Activated CD4-positive, alpha-beta T cell treated with anti-CD3 and anti-CD28 coated beads for 36 hours (primary cell): ENCODE measurements at regions of chr5 and their contacts with region 1.

Region 1: DNA sequence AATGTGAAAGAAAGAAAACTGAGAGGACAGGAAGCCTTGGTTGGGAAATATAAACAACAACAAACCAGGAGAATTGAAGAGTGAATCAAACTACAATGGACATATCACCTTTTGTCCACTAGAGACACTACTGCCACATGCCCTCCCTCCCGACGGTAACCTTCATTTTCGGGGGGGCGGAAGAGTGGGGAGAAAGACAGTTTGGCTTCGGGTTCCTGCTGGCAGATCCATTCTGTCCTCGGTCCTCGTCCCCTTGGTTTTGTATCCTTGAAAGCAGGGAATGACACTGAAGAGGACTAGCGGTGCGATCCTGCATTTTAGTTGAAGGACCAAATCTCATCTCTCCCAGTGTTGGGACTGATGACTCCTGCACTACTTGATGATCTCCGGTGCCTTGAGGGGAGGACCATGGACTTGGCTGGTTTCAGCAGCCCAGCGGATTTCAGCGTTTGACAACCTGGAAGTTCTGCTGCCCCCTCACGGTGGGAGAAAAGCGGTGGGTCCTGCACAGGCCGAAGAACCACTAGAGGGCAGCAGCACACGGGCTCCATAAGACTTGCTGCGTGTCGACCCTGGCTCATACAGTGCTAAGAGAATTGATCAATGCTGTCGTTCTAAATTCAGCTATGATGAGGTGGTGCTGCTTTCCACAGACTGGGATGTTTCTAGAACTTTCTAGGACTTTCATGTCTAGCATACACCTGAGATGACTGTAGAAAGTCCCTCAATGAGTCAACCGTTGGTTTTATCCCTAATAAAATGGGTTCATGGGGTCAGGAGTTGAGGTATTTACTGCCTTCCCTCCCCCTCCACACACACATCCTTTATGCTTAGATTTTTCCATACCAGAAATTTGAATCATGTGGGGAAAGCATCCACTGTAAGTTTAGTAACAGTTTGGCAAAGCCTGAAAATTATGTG is 15.1 kb upstream of the ZNF131 start:
- DNase-seq: peak; percentile 93
- ATAC-seq: peak; percentile 91
- H3K4me3 Mint-ChIP-seq: peak overlapping the region; percentile 71
- H3K27ac Mint-ChIP-seq: peak overlapping the region; percentile 91
- H3K4me1 Mint-ChIP-seq: peaks cover 43% of the 10 kb centered on the region
- H3K27me3 Mint-ChIP-seq: no peaks in the 10 kb centered on the region

Region 2: GRCh38 chr5:42349163-42349562 is 756.5 kb before region 1 on chr5:
- CTCF ChIA-PET with region 1: no interaction called
- POLR2A ChIA-PET with region 1: no interaction called
- intact Hi-C with region 1: no loop called
- DNase-seq: no peak
- ATAC-seq: no peak
- H3K4me3 Mint-ChIP-seq: no peak overlapping the region
- H3K27ac Mint-ChIP-seq: no peak overlapping the region
- H3K4me1 Mint-ChIP-seq: no peaks in the 10 kb centered on the region
- H3K27me3 Mint-ChIP-seq: no peaks in the 10 kb centered on the region

Region 3: GRCh38 chr5:42811591-42812446 is 293.8 kb before region 1 on chr5 and contains the start of gene SELENOP:
- CTCF ChIA-PET with region 1: no interaction called
- POLR2A ChIA-PET with region 1: no interaction called
- intact Hi-C with region 1: no loop called
- DNase-seq: no peak
- ATAC-seq: no peak
- H3K4me3 Mint-ChIP-seq: no peak within 1 kb of the TSS
- H3K27ac Mint-ChIP-seq: no peak within 1 kb of the TSS
- H3K4me1 Mint-ChIP-seq: peaks cover 5% of the 10 kb centered on the region
- H3K27me3 Mint-ChIP-seq: no peaks in the 10 kb centered on the region
- total RNA-seq, gene SELENOP: not detected

Region 4: DNA sequence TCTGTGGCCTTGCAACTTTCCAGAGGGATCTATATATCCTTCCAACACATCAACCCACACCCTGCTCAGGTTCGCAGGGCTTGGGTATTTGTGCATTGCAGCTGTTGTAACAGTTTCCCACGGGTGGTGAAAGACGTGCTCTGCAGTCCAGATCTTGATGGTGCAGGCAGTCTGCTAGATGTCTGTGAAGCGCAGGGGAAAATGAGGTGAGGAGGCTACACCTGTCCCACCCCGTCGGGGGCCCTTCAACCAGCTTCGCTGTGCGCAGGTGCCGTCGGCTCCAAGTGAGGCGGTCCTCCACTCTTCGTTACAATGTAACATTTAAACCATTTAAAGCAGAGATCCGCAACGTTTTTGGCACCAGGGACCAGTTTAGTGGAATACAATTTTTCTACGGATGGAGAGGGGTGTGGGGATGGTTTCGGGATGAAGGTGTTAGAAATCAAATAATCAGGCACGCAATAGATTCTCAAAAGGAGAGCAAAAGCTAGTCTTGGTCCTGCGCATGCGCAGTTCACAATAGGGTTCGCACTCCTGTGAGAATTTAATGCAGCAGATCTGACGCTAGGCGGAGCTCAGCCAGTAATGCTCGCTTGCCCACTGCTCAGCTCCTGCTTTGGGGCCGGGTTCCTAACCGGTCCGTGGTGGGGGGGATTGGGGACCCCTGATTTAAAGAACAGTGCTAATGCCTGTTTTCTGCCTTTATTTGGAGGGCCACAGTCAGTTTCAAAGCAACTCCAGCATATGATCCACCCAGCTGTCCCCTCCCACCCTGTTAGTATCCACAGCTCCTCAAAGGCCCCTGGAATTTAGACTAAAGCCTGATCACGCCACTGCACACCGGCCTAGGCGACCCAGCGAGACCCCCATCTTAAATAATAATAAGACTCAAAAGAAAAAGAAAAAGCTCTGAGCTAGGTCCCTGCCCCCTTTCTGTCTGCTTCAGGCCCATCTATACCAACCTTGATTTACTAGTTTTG is 196.8 kb before region 1 on chr5:
- CTCF ChIA-PET with region 1: interaction called, 5 read pairs
- POLR2A ChIA-PET with region 1: no interaction called
- intact Hi-C with region 1: loop called (anchors 1 to 5 kb)
- DNase-seq: peak; percentile 95
- ATAC-seq: peak; percentile 95
- H3K4me3 Mint-ChIP-seq: peak overlapping the region; percentile 75
- H3K27ac Mint-ChIP-seq: peak overlapping the region; percentile 48
- H3K4me1 Mint-ChIP-seq: peaks cover 14% of the 10 kb centered on the region
- H3K27me3 Mint-ChIP-seq: peaks cover 8% of the 10 kb centered on the region

Region 5: GRCh38 chr5:42994246-42995151 is 111.1 kb before region 1 on chr5:
- CTCF ChIA-PET with region 1: interaction called, 5 read pairs
- POLR2A ChIA-PET with region 1: no interaction called
- intact Hi-C with region 1: loop called in 1 of 2 experiments (anchors 2 kb)
- DNase-seq: peak; percentile 93
- ATAC-seq: peak; percentile 67
- H3K4me3 Mint-ChIP-seq: peak overlapping the region; percentile 98
- H3K27ac Mint-ChIP-seq: peak overlapping the region; percentile 100
- H3K4me1 Mint-ChIP-seq: peaks cover 25% of the 10 kb centered on the region
- H3K27me3 Mint-ChIP-seq: no peaks in the 10 kb centered on the region

Region 6: GRCh38 chr5:43019614-43020293 is 85.9 kb before region 1 on chr5:
- CTCF ChIA-PET with region 1: interaction called, 5 read pairs
- POLR2A ChIA-PET with region 1: interaction called, 4 read pairs
- intact Hi-C with region 1: loop called in 1 of 2 experiments (anchors 5 kb)
- DNase-seq: peak; percentile 91
- ATAC-seq: peak; percentile 70
- H3K4me3 Mint-ChIP-seq: peak overlapping the region; percentile 94
- H3K27ac Mint-ChIP-seq: peak overlapping the region; percentile 99
- H3K4me1 Mint-ChIP-seq: peaks cover 33% of the 10 kb centered on the region
- H3K27me3 Mint-ChIP-seq: no peaks in the 10 kb centered on the region

Region 7: GRCh38 chr5:43305948-43306565 is 200.4 kb after region 1 on chr5:
- CTCF ChIA-PET with region 1: interaction called, 5 read pairs
- POLR2A ChIA-PET with region 1: no interaction called
- intact Hi-C with region 1: loop called in 1 of 2 experiments (anchors 2 kb)
- DNase-seq: no peak
- ATAC-seq: peak; percentile 37
- H3K4me3 Mint-ChIP-seq: peak overlapping the region; percentile 12
- H3K27ac Mint-ChIP-seq: peak overlapping the region; percentile 63
- H3K4me1 Mint-ChIP-seq: peaks cover 80% of the 10 kb centered on the region
- H3K27me3 Mint-ChIP-seq: no peaks in the 10 kb centered on the region

Region 8: GRCh38 chr5:43514816-43515677 is 409.4 kb after region 1 on chr5 and contains the start of gene C5orf34:
- CTCF ChIA-PET with region 1: no interaction called
- POLR2A ChIA-PET with region 1: no interaction called
- intact Hi-C with region 1: loop called in 1 of 2 experiments (anchors 2 kb)
- DNase-seq: peak; percentile 97
- ATAC-seq: peak; percentile 93
- H3K4me3 Mint-ChIP-seq: peak within 1 kb of the TSS; percentile 89
- H3K27ac Mint-ChIP-seq: peak within 1 kb of the TSS; percentile 99
- H3K4me1 Mint-ChIP-seq: peaks cover 23% of the 10 kb centered on the region
- H3K27me3 Mint-ChIP-seq: no peaks in the 10 kb centered on the region
- total RNA-seq, gene C5orf34: 14.4 to 16.8 TPM